H1 (cell line): ENCODE measurements at regions of chr1 and their contacts with region 1.

Region 1: GRCh38 chr1:104235141-104235540 is 485.4 kb downstream of the AMY1C start:
- DNase-seq: no peak
- H3K4me3 ChIP-seq: no peak overlapping the region
- H3K27ac ChIP-seq: no peak overlapping the region
- H3K4me1 ChIP-seq: no peaks in the 10 kb centered on the region
- H3K27me3 ChIP-seq: no peaks in the 10 kb centered on the region
- CTCF ChIP-seq: no peak
- EP300 ChIP-seq: no peak
- POLR2A ChIP-seq: no peak
- RAD21 ChIP-seq: no peak

Region 2: GRCh38 chr1:104120525-104120924 is 114.6 kb before region 1 on chr1:
- CTCF ChIA-PET with region 1: no interaction called
- POLR2A ChIA-PET with region 1: no interaction called
- DNase-seq: no peak
- H3K4me3 ChIP-seq: no peak overlapping the region
- H3K27ac ChIP-seq: no peak overlapping the region
- H3K4me1 ChIP-seq: no peaks in the 10 kb centered on the region
- H3K27me3 ChIP-seq: no peaks in the 10 kb centered on the region
- CTCF ChIP-seq: peak in 1 of 3 experiments; percentile 6; a peak in 2 of 4 replicates
- EP300 ChIP-seq: no peak
- POLR2A ChIP-seq: no peak
- RAD21 ChIP-seq: peak in 1 of 2 experiments; percentile 47; a peak in 3 of 4 replicates

Region 3: DNA sequence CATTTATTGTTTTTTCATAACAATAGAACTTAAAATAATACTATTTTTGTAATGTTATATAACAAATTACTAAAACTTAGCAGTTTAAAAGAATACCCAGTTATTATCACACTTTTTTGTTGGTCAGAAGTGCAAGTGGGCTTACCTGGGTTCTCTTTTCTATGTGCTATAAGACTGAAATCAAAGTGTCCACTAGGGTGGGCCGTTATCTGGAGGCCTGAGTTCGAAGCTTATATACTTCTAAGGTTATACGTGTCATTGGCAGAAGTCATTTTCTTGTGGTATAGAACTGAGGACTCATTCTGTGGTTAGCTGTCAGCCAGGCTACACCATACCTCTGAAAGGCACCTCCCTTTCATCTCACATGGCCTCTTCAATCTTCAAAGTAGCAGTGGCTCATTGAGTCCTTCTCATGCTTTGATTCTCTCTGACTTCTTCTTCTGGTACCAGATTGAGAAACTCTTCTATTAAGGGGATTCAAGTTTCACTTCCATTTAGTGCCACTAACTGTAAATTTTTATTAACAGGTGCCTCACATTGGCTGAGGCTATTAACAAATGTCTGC is 71.1 kb before region 1 on chr1:
- CTCF ChIA-PET with region 1: no interaction called
- POLR2A ChIA-PET with region 1: no interaction called
- DNase-seq: no peak
- H3K4me3 ChIP-seq: no peak overlapping the region
- H3K27ac ChIP-seq: no peak overlapping the region
- H3K4me1 ChIP-seq: no peaks in the 10 kb centered on the region
- H3K27me3 ChIP-seq: no peaks in the 10 kb centered on the region
- CTCF ChIP-seq: peak in 1 of 3 experiments; percentile 20; a peak in 1 of 4 replicates
- EP300 ChIP-seq: no peak
- POLR2A ChIP-seq: no peak
- RAD21 ChIP-seq: peak in 1 of 2 experiments; percentile 26; a peak in 1 of 4 replicates

Region 4: DNA sequence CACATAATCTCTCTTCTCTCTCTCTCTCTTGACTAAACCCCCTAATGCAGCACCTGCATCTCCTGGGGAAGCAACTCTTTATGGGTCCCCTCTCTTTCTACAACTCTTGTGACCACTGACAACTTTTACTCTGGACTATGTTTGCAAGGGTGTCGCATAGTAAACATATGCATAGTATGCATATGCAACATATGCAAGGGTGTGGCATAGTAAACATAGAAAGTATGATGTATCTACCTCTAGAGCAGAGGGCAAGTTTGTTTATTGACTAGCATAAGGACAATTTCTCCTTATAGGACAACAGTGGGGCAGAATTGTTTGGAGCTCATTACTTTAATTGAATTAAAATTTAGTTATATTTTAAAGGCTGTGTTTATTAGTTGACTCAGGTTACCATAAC is 22.9 kb before region 1 on chr1:
- CTCF ChIA-PET with region 1: no interaction called
- POLR2A ChIA-PET with region 1: no interaction called
- DNase-seq: no peak
- H3K4me3 ChIP-seq: no peak overlapping the region
- H3K27ac ChIP-seq: no peak overlapping the region
- H3K4me1 ChIP-seq: no peaks in the 10 kb centered on the region
- H3K27me3 ChIP-seq: no peaks in the 10 kb centered on the region
- CTCF ChIP-seq: no peak
- EP300 ChIP-seq: no peak
- POLR2A ChIP-seq: no peak
- RAD21 ChIP-seq: no peak

Region 5: GRCh38 chr1:104248385-104248784 is 13.2 kb after region 1 on chr1:
- CTCF ChIA-PET with region 1: no interaction called
- POLR2A ChIA-PET with region 1: no interaction called
- DNase-seq: no peak
- H3K4me3 ChIP-seq: no peak overlapping the region
- H3K27ac ChIP-seq: no peak overlapping the region
- H3K4me1 ChIP-seq: no peaks in the 10 kb centered on the region
- H3K27me3 ChIP-seq: no peaks in the 10 kb centered on the region
- CTCF ChIP-seq: no peak
- EP300 ChIP-seq: no peak
- POLR2A ChIP-seq: no peak
- RAD21 ChIP-seq: no peak

Region 6: GRCh38 chr1:104266612-104267011 is 31.5 kb after region 1 on chr1:
- CTCF ChIA-PET with region 1: interaction called, 13 read pairs
- POLR2A ChIA-PET with region 1: no interaction called
- DNase-seq: no peak
- H3K4me3 ChIP-seq: no peak overlapping the region
- H3K27ac ChIP-seq: no peak overlapping the region
- H3K4me1 ChIP-seq: no peaks in the 10 kb centered on the region
- H3K27me3 ChIP-seq: no peaks in the 10 kb centered on the region
- CTCF ChIP-seq: no peak
- EP300 ChIP-seq: no peak
- POLR2A ChIP-seq: no peak
- RAD21 ChIP-seq: no peak